ENCODE measurements at regions of chr1 and their contacts with region 1.

Region 1: GRCh38 chr1:14689996-14690615 is 91.6 kb downstream of the KAZN start:
- DNase-seq: no peak
- ATAC-seq: 0 out of 2 replicates have a peak, but pooled peaks have one; percentile 38
- H3K4me3 ChIP-seq: no peak overlapping the region
- H3K27ac ChIP-seq: no peak overlapping the region
- H3K4me1 ChIP-seq: no peaks in the 10 kb centered on the region
- H3K27me3 ChIP-seq: peaks cover 23% of the 10 kb centered on the region
- CTCF ChIP-seq: no peak

Region 2: GRCh38 chr1:14980621-14981218 is 290.6 kb after region 1 on chr1:
- CTCF ChIA-PET with region 1: no interaction called
- POLR2A ChIA-PET with region 1: interaction called, 16 read pairs
- in situ Hi-C with region 1: no loop called
- intact Hi-C with region 1: no loop called
- DNase-seq: no peak
- ATAC-seq: no peak
- H3K4me3 ChIP-seq: no peak overlapping the region
- H3K27ac ChIP-seq: no peak overlapping the region
- H3K4me1 ChIP-seq: peaks cover 3% of the 10 kb centered on the region; the same call in 1 of the 2 replicates
- H3K27me3 ChIP-seq: no peaks in the 10 kb centered on the region
- CTCF ChIP-seq: no peak

Measured in Panc1 (cell line).